HEK293 (cell line): ENCODE measurements at regions of chr1 and their contacts with region 1.

Region 1: GRCh38 chr1:168082008-168082876 is 54.5 kb downstream of the GPR161 start:
- H3K4me3 ChIP-seq: no peak overlapping the region
- H3K27ac ChIP-seq: no peak overlapping the region
- H3K4me1 ChIP-seq: no peaks in the 10 kb centered on the region
- CTCF ChIP-seq: peak; percentile 76

Region 2: DNA sequence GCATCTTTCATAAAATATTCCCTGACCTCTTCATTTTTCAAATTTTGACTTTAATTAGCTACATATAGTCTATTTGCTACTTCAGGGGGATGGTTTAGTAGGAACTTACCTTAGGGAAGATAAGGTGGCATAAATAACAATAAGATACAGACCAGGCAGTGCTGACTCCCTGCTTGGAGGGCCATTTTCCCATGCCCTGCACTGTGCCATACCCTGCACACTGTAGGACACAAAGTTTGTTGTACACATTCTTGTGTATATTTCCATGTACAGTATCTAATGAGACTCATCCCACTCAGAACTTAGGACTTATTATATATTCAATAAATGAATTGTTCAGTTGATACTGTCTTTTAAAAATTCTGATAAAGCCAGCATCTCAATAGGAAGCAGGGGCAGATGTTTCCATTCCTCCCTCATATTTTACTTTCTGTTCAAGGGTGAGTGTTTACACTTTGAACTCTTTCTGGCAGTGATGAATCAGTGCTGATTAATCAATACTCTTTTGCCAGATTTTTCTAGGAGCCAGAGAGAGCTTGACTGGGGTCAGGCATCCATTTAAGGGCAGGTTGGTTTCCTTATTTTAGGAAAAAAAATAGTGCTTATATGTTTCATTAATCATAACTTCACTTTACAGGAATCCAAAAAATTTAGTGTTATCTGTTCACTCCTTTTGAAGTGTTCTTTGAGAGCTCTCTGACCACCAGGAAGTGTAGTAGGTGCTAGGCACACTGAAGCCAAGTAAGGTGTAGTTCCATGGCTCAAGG is 329.8 kb before region 1 on chr1:
- CTCF ChIA-PET with region 1: no interaction called
- POLR2A ChIA-PET with region 1: no interaction called
- H3K4me3 ChIP-seq: no peak overlapping the region
- H3K27ac ChIP-seq: no peak overlapping the region
- H3K4me1 ChIP-seq: peaks cover 10% of the 10 kb centered on the region
- CTCF ChIP-seq: no peak

Region 3: DNA sequence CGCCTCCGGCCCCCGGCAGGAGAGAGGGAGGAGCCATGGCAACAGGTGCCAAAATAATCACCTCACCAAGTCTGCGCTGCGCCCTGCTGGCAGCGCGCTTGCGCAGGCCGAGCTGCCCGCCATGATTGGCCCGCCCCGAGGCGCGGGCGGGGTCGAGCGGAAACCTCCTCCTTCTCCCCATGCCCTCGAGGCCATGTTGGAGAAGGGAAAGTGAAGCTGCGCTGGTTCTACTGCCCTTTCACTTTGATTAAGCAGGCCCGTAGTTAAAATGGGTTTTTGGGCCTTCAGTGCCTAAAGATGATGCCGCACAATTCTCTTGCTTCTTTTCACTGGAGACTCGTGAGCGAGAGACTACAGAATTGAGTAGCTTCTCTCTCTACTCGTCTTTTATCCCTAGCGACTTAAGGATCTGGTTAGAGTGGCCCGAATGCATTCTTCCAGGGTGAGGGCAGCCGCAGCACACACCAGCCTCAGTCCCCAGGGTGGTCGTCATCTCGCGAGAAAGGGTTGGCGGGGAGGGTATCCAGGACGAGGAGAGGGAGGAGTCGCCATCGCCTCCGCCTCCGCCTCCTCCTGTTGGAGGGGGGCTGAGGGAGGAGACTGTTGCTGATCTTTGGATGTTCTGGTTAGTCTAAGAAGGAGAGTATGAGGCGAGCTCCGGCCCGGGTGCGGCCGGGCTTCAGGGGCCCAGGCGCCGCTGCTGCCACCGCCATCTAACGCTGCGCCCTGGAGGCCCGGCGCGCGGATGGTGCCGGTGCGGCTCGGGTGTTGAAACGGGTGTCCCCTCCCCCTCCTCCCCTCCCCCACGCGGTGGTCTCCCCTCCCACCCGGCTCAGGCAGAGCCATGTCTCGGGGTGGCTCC is 145.9 kb before region 1 on chr1 and contains the start of gene DCAF6:
- CTCF ChIA-PET with region 1: interaction called, 25 read pairs
- POLR2A ChIA-PET with region 1: interaction called, 22 read pairs
- H3K4me3 ChIP-seq: peak within 1 kb of the TSS; percentile 92
- H3K27ac ChIP-seq: peak within 1 kb of the TSS; percentile 88
- H3K4me1 ChIP-seq: no peaks in the 10 kb centered on the region; the same call in 1 of the 2 replicates
- CTCF ChIP-seq: no peak

Region 4: DNA sequence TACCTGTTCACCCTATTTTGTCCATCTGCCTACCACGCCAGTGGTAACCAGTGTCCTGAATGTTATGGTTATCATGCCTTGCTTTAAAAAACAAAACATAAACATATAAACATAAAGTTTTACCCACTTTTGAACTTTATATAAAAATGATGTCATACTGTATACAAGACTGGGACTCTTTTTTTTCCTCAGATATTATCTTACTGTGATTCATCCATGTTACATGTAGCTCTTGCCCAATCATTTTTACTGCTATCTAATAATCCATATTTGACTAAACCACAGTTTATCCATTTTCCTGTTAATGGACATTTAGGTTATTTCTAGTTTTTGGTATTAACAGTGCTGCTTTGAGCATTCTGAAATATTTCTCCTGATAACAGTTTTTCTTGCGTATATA is 24.3 kb before region 1 on chr1:
- CTCF ChIA-PET with region 1: interaction called, 10 read pairs
- POLR2A ChIA-PET with region 1: no interaction called
- H3K4me3 ChIP-seq: no peak overlapping the region
- H3K27ac ChIP-seq: no peak overlapping the region
- H3K4me1 ChIP-seq: no peaks in the 10 kb centered on the region
- CTCF ChIP-seq: no peak

Region 5: DNA sequence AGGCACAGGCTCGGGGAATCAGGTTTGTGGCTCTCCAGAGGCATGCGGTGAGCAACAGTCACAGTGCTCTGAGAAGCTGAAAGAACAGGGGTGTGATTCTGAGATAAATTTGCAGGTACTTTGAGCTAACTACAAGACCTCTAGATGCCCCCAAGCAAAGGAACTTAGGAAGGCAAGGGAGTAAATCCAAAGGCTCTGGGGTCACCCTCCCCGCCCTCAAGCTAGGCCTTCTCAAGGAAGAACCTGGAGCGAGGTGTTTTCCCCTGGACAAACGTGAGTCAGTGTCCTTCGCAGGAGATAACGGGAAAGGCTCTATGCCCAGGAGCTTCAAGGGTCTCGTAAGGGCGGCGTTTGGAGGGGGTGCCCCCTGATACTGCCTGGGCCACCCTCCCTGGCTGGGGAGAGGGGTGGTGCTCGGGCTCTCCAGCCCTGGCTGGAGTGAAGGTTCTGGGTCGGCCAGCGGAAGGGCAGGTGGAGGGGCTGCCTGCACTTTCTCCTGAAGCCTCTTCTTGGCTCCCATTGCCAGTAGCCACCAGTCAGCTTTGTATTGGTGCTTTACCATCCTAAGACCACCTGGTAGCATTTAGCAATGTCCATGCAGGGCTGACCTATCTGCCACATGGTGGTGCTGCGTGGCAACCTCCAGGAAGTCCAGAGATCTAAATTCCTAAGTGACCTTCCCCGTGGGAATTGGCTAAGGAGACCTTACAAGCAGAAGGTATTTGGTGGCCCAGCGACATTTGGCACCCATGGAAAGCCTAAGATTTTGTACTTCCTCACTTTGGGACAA is 10.5 kb after region 1 on chr1:
- CTCF ChIA-PET with region 1: interaction called, 26 read pairs
- POLR2A ChIA-PET with region 1: no interaction called
- H3K4me3 ChIP-seq: no peak overlapping the region
- H3K27ac ChIP-seq: no peak overlapping the region
- H3K4me1 ChIP-seq: no peaks in the 10 kb centered on the region
- CTCF ChIP-seq: no peak

Region 6: GRCh38 chr1:168129933-168130332 is 47.7 kb after region 1 on chr1:
- CTCF ChIA-PET with region 1: interaction called, 12 read pairs
- POLR2A ChIA-PET with region 1: no interaction called
- H3K4me3 ChIP-seq: no peak overlapping the region
- H3K27ac ChIP-seq: no peak overlapping the region
- H3K4me1 ChIP-seq: peaks cover 3% of the 10 kb centered on the region
- CTCF ChIP-seq: no peak

Region 7: GRCh38 chr1:168301664-168302334 is 219.6 kb after region 1 on chr1:
- CTCF ChIA-PET with region 1: no interaction called
- POLR2A ChIA-PET with region 1: no interaction called
- H3K4me3 ChIP-seq: no peak overlapping the region
- H3K27ac ChIP-seq: no peak overlapping the region
- H3K4me1 ChIP-seq: no peaks in the 10 kb centered on the region
- CTCF ChIP-seq: no peak

Region 8: DNA sequence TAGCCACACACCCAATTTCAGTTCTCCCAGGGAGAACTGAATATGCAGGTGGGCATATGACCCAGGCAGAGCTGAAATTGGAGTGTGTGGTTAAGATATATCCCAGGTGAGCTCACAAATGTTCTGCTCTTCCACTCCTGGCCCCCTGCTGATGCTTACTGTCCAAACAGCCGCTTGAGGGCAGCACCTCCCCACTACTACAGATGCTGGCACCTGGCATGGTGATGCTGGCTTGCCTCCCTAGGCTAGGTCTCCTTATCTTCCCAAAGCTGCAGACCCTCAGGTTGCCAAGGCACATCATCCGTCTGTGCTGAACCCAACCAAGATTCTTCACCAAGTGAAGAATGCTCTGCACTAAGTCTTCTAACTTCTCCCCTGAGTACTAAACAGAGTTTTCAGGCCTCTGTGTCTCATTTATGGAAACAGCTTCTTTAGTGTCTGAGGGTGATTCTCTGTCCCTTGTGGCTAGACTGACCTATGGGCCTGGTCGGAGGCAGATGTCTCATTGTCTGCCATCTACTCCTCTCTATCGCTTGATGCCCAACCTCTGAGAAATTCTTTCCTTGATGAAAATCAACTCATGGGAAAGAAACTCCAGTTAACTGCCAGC is 521.4 kb after region 1 on chr1:
- CTCF ChIA-PET with region 1: no interaction called
- POLR2A ChIA-PET with region 1: no interaction called
- H3K4me3 ChIP-seq: no peak overlapping the region
- H3K27ac ChIP-seq: no peak overlapping the region
- H3K4me1 ChIP-seq: no peaks in the 10 kb centered on the region
- CTCF ChIP-seq: peak; percentile 86